GM12878 (cell line): ENCODE measurements at regions of chr10 and their contacts with region 1.

Region 1: DNA sequence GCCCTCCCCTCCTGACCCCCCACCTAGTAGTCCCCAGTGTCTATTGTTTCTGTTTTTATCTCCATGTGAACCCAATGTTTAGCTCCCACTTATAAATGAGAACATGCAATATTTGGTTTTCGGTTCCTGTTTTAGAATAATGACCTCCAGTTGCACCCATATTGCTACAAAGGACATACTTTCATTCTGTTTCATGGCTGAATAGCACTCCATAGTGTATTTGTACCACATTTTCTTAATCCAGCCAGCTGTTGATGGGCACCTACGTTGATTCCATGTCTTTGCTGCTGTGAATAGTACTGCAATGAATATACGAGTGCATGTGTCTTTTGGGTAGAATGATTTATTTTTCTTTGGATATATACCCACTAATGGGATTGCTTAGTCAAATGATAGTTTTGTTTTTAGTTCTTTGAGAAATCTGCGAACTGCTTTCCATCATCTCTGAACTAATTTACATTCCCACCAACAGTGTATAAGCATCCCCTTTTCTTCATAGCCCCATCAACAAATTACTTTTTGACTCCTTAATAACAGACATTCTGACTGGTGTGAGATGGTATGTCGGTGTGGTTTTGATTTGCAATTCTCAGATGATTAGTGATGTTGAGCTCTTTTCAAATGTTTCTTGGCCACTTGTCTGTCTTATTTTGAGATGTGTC is 128.4 kb upstream of the PHYHIPL start:
- DNase-seq: peak; percentile 84
- ATAC-seq: peak; percentile 90
- H3K4me3 ChIP-seq: peak overlapping the region; percentile 33; the same call in 1 of the 2 replicates
- H3K27ac ChIP-seq: peak overlapping the region; percentile 65
- H3K4me1 ChIP-seq: peaks cover 15% of the 10 kb centered on the region
- H3K27me3 ChIP-seq: no peaks in the 10 kb centered on the region; a peak in 1 of 4 replicates
- CTCF ChIP-seq: no peak
- EP300 ChIP-seq: peak; percentile 68 to 97
- POLR2A ChIP-seq: no peak
- RAD21 ChIP-seq: peak; percentile 27; the same call in 1 of the 2 replicates

Region 2: GRCh38 chr10:58796242-58796641 is 251.8 kb before region 1 on chr10:
- CTCF ChIA-PET with region 1: no interaction called
- POLR2A ChIA-PET with region 1: no interaction called
- RAD21 ChIA-PET with region 1: no interaction called
- SMC1A ChIA-PET with region 1: no interaction called
- in situ Hi-C with region 1: no loop called
- intact Hi-C with region 1: no loop called
- DNase-seq: no peak
- ATAC-seq: no peak
- H3K4me3 ChIP-seq: no peak overlapping the region
- H3K27ac ChIP-seq: no peak overlapping the region
- H3K4me1 ChIP-seq: no peaks in the 10 kb centered on the region
- H3K27me3 ChIP-seq: no peaks in the 10 kb centered on the region
- CTCF ChIP-seq: no peak
- EP300 ChIP-seq: no peak
- POLR2A ChIP-seq: no peak
- RAD21 ChIP-seq: no peak

Region 3: DNA sequence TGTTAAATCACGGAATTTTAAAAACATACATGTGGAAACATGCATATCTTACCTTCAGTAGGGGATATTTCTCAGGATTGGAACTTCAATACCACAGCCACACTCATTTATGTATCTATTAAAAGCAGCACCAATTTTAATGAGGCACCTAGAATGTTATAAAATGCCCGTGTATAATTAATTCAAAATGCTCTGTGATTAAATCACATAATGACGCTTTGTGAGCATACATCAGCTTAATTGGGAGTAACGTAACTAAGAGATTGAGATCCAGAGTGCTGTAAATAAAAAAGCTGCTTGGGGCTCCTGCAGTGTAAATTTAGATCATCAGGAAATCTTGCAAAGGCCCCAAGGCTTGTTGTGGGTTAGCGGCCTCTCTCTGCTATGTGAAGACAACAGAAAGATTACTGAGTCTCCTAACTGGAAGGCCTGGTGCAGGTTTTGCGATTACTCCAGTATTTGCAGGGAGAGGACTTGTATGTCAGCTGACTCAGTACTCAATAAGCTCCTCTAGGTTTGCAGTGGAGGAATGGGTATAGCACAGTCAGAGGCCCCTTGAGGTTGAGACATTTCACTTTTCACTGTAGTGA is 67.2 kb before region 1 on chr10:
- CTCF ChIA-PET with region 1: interaction called, 4 read pairs
- POLR2A ChIA-PET with region 1: interaction called, 4 read pairs
- RAD21 ChIA-PET with region 1: interaction called, 10 read pairs
- SMC1A ChIA-PET with region 1: interaction called, 22 read pairs
- in situ Hi-C with region 1: no loop called
- intact Hi-C with region 1: no loop called
- DNase-seq: no peak
- ATAC-seq: peak; percentile 45; the same call in 2 of the 3 replicates
- H3K4me3 ChIP-seq: no peak overlapping the region
- H3K27ac ChIP-seq: no peak overlapping the region
- H3K4me1 ChIP-seq: no peaks in the 10 kb centered on the region
- H3K27me3 ChIP-seq: no peaks in the 10 kb centered on the region
- CTCF ChIP-seq: no peak
- EP300 ChIP-seq: no peak
- POLR2A ChIP-seq: no peak
- RAD21 ChIP-seq: no peak

Region 4: DNA sequence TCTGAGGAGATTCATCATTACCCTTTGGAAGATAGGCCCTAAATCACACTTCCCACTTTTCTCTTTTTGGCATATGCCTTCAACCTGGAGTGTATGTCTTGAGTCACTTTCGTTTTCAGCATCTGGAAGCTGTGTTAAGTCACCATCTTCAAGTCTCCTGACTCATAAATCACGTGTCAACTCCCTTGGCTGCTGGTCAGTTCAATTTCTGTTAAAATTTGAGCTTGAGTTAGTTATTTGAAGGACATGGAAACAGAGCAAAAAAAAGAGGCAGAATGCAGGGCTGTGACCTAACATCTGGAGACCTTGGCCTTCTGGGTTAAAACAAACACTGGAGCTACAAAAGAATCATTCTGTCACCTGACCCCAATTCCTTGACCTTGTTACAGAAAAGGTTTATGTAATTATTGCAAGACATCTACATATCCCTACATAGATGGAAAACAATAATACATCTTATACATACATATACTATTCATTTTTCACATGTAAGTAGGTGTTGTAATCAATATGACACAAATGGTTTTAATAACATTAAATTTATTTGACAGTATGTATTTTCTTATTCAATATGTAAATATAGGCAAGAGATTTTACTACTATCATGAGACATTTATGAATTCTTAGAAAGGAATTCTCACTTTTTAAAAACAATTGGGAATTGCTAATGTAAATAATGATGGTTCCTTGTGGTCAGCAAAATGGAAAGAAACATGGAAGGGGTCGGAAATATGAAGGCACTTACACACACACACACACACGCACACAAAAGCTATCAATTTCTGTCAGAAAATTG is 41.4 kb before region 1 on chr10:
- CTCF ChIA-PET with region 1: interaction called, 9 read pairs
- POLR2A ChIA-PET with region 1: interaction called, 8 read pairs
- RAD21 ChIA-PET with region 1: interaction called, 26 read pairs
- SMC1A ChIA-PET with region 1: interaction called, 36 read pairs
- in situ Hi-C with region 1: no loop called
- intact Hi-C with region 1: no loop called
- DNase-seq: no peak
- ATAC-seq: peak; percentile 49
- H3K4me3 ChIP-seq: no peak overlapping the region
- H3K27ac ChIP-seq: no peak overlapping the region
- H3K4me1 ChIP-seq: peaks cover 4% of the 10 kb centered on the region
- H3K27me3 ChIP-seq: no peaks in the 10 kb centered on the region
- CTCF ChIP-seq: no peak
- EP300 ChIP-seq: 0 out of 4 replicates have a peak, but pooled peaks of 1 of the 2 experiments have one; percentile 26
- POLR2A ChIP-seq: no peak
- RAD21 ChIP-seq: no peak

Region 5: DNA sequence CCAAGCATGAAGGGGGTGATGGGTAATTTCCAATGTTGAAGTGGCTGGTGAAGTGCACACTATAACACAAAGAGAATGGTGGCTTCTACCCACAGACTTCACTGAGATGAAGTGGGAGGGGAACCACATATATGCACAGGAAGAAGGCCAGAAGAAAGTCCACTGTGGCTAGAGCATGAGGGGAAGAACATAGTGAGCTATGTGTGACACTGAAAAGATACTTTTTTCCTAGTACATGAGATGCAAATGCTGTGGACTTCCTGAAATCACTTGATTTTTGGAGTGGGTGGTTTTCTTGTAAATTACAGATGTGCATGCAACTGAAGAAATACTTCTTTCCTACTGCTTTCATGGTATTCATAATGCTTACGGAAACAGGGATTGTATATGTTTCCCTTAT is 12.8 kb after region 1 on chr10:
- CTCF ChIA-PET with region 1: interaction called, 6 read pairs
- POLR2A ChIA-PET with region 1: interaction called, 13 read pairs
- RAD21 ChIA-PET with region 1: interaction called, 40 read pairs
- SMC1A ChIA-PET with region 1: interaction called, 52 read pairs
- in situ Hi-C with region 1: no loop called
- intact Hi-C with region 1: loop called (anchors 1 kb)
- DNase-seq: peak; percentile 53
- ATAC-seq: peak; percentile 87
- H3K4me3 ChIP-seq: no peak overlapping the region
- H3K27ac ChIP-seq: no peak overlapping the region
- H3K4me1 ChIP-seq: peaks cover 7% of the 10 kb centered on the region
- H3K27me3 ChIP-seq: no peaks in the 10 kb centered on the region
- CTCF ChIP-seq: no peak
- EP300 ChIP-seq: peak; percentile 27 to 67; a peak in 3 of 4 replicates
- POLR2A ChIP-seq: no peak
- RAD21 ChIP-seq: no peak; the same call in 1 of the 2 replicates

Region 6: GRCh38 chr10:59107147-59107546 is 59.1 kb after region 1 on chr10:
- CTCF ChIA-PET with region 1: interaction called, 8 read pairs
- POLR2A ChIA-PET with region 1: interaction called, 4 read pairs
- RAD21 ChIA-PET with region 1: interaction called, 24 read pairs
- SMC1A ChIA-PET with region 1: interaction called, 12 read pairs
- in situ Hi-C with region 1: no loop called
- intact Hi-C with region 1: loop called (anchors 2 kb)
- DNase-seq: peak; percentile 26
- ATAC-seq: peak; percentile 78
- H3K4me3 ChIP-seq: no peak overlapping the region
- H3K27ac ChIP-seq: no peak overlapping the region
- H3K4me1 ChIP-seq: no peaks in the 10 kb centered on the region
- H3K27me3 ChIP-seq: no peaks in the 10 kb centered on the region
- CTCF ChIP-seq: no peak
- EP300 ChIP-seq: no peak
- POLR2A ChIP-seq: no peak
- RAD21 ChIP-seq: no peak